B cell (primary cell): ENCODE measurements at regions of chr12 and their contacts with region 1.

Region 1: GRCh38 chr12:91811481-91812287 is 334.0 kb downstream of the BTG1 start:
- DNase-seq: peak; percentile 80
- ATAC-seq: peak; percentile 71
- H3K4me3 ChIP-seq: no peak overlapping the region
- H3K4me3 Mint-ChIP-seq: no peak overlapping the region
- H3K27ac ChIP-seq: no peak overlapping the region
- H3K27ac Mint-ChIP-seq: peak overlapping the region; percentile 43
- H3K4me1 ChIP-seq: peaks cover 0 to 5% of the 10 kb centered on the region in 2 donors
- H3K4me1 Mint-ChIP-seq: peaks cover 4% of the 10 kb centered on the region
- H3K27me3 ChIP-seq: no peaks in the 10 kb centered on the region
- H3K27me3 Mint-ChIP-seq: no peaks in the 10 kb centered on the region
- CTCF ChIP-seq: peak; percentile 90

Region 2: DNA sequence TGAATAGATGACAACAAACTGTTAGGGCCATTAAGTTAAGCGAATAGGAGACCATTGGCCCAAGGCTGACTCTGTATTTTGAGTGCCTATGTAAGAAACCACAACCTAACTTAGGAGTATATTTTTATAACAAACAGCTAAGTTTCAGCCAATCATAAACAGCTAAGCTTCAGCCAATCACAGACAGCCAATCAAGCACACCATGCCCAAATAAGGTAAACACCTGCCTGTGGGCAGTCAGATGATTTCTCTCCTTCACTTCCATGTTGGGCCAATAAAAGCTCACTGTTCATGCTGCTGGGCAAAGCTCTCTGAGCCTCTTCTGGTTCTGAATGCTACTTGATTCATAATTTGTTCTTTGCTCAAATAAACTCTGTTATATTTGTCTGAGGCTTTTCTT is 10.6 kb before region 1 on chr12:
- CTCF ChIA-PET with region 1: interaction called, 18 read pairs
- POLR2A ChIA-PET with region 1: no interaction called
- intact Hi-C with region 1: no loop called
- DNase-seq: no peak
- ATAC-seq: no peak
- H3K4me3 ChIP-seq: no peak overlapping the region
- H3K4me3 Mint-ChIP-seq: no peak overlapping the region
- H3K27ac ChIP-seq: no peak overlapping the region
- H3K27ac Mint-ChIP-seq: no peak overlapping the region
- H3K4me1 ChIP-seq: no peaks in the 10 kb centered on the region
- H3K4me1 Mint-ChIP-seq: no peaks in the 10 kb centered on the region
- H3K27me3 ChIP-seq: no peaks in the 10 kb centered on the region
- H3K27me3 Mint-ChIP-seq: peaks cover 3% of the 10 kb centered on the region
- CTCF ChIP-seq: no peak

Region 3: GRCh38 chr12:91870872-91871707 is 59.4 kb after region 1 on chr12:
- CTCF ChIA-PET with region 1: no interaction called
- POLR2A ChIA-PET with region 1: no interaction called
- intact Hi-C with region 1: no loop called
- DNase-seq: no peak
- ATAC-seq: no peak
- H3K4me3 ChIP-seq: no peak overlapping the region
- H3K4me3 Mint-ChIP-seq: no peak overlapping the region
- H3K27ac ChIP-seq: no peak overlapping the region
- H3K27ac Mint-ChIP-seq: no peak overlapping the region
- H3K4me1 ChIP-seq: no peaks in the 10 kb centered on the region
- H3K4me1 Mint-ChIP-seq: peaks cover 2% of the 10 kb centered on the region
- H3K27me3 ChIP-seq: no peaks in the 10 kb centered on the region
- H3K27me3 Mint-ChIP-seq: no peaks in the 10 kb centered on the region
- CTCF ChIP-seq: no peak

Region 4: GRCh38 chr12:91902860-91903683 is 91.4 kb after region 1 on chr12:
- CTCF ChIA-PET with region 1: no interaction called
- POLR2A ChIA-PET with region 1: no interaction called
- intact Hi-C with region 1: no loop called
- DNase-seq: no peak
- ATAC-seq: no peak
- H3K4me3 ChIP-seq: no peak overlapping the region
- H3K4me3 Mint-ChIP-seq: no peak overlapping the region
- H3K27ac ChIP-seq: no peak overlapping the region
- H3K27ac Mint-ChIP-seq: no peak overlapping the region
- H3K4me1 ChIP-seq: no peaks in the 10 kb centered on the region
- H3K4me1 Mint-ChIP-seq: peaks cover 3% of the 10 kb centered on the region
- H3K27me3 ChIP-seq: no peaks in the 10 kb centered on the region
- H3K27me3 Mint-ChIP-seq: no peaks in the 10 kb centered on the region
- CTCF ChIP-seq: no peak

Region 5: DNA sequence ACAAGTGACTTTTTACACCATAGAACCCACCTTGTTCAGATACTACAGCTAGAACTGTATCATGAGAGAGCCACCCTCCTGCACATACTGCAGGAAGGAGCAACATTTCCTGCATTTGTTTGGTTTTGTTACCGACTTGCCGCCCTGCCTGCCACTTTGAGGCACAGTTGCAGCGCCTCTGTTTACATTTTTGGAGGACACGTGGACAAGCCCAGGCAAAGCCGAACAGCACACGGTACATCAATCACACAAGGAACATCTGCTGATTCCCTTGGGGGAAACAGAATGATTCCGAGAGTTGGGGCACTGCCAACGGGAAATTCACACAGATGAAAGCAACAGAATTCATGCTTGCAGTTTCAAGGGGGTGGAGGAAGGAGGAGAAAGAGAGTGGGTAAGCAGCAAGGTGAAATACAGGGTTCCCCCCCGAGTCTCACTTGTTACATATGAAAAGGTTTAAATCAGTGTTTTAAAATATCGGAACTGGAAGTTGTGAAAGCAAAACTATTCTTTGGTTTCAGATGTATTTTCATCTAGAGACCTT is 223.2 kb after region 1 on chr12:
- CTCF ChIA-PET with region 1: interaction called, 3 read pairs
- POLR2A ChIA-PET with region 1: no interaction called
- intact Hi-C with region 1: loop called (anchors 10 kb)
- DNase-seq: peak; percentile 86
- ATAC-seq: peak; percentile 76
- H3K4me3 ChIP-seq: peak overlapping the region; percentile 32 to 60 (median 52)
- H3K4me3 Mint-ChIP-seq: peak overlapping the region; percentile 85
- H3K27ac ChIP-seq: peak overlapping the region; percentile 61 to 75
- H3K27ac Mint-ChIP-seq: peak overlapping the region; percentile 79
- H3K4me1 ChIP-seq: peaks cover 29 to 40% of the 10 kb centered on the region in 2 donors
- H3K4me1 Mint-ChIP-seq: peaks cover 53% of the 10 kb centered on the region
- H3K27me3 ChIP-seq: no peaks in the 10 kb centered on the region
- H3K27me3 Mint-ChIP-seq: no peaks in the 10 kb centered on the region
- CTCF ChIP-seq: no peak

Region 6: GRCh38 chr12:92408072-92408900 is 596.6 kb after region 1 on chr12:
- CTCF ChIA-PET with region 1: interaction called, 3 read pairs
- POLR2A ChIA-PET with region 1: no interaction called
- intact Hi-C with region 1: loop called (anchors 10 kb)
- DNase-seq: peak; percentile 74
- ATAC-seq: peak; percentile 49
- H3K4me3 ChIP-seq: no peak overlapping the region
- H3K4me3 Mint-ChIP-seq: peak overlapping the region; percentile 0
- H3K27ac ChIP-seq: peak overlapping the region; percentile 40 to 71
- H3K27ac Mint-ChIP-seq: peak overlapping the region; percentile 88
- H3K4me1 ChIP-seq: peaks cover 43% of the 10 kb centered on the region in 2 donors
- H3K4me1 Mint-ChIP-seq: peaks cover 67% of the 10 kb centered on the region
- H3K27me3 ChIP-seq: no peaks in the 10 kb centered on the region
- H3K27me3 Mint-ChIP-seq: no peaks in the 10 kb centered on the region
- CTCF ChIP-seq: peak; percentile 57